CD4-positive, alpha-beta T cell (primary cell): ENCODE measurements at regions of chr22 and their contacts with region 1.

Region 1: DNA sequence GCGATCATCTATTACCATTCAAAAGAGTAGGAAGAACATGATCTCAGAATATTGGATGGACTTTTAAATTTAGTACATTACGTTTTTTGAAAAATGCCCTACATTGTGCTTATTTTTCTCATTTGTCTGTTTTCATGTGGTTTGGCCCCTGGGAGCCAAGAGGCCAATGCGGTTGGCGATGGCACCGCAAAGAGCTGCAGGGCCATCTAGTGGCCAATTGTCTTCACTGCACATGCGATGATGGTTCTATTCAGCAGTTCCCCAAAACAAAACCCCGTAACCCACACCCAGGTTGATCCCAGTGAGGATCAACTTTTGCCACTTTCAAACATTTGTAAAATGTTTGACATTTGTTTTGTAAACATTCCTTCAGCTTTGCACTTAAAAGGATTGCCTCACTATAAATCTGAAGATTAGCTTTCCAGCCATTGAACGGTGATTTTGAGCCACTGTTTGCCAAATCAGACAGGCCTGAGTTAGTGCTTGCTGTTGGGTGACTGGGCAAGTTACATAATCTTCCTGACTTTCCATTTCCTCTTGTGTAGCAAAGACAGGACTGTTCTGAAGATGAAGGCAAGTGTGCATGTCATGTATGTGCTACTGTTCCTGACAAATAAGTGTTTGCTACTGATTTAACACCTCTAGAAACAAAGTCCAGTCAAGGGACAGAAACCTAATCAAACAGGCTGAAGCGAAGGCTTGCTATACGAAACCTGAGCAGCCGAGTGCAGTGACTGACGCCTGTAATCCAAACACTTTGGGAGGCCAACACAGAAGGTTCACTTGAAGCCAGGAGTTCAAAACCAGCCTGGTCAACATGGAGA is 29.2 kb upstream of the XBP1 start:
- DNase-seq: peak; percentile 56 to 88 (median 70)
- ATAC-seq: peak; percentile 87
- H3K4me3 ChIP-seq: no peak overlapping the region
- H3K4me3 Mint-ChIP-seq: peak overlapping the region; percentile 22
- H3K27ac ChIP-seq: no peak overlapping the region
- H3K27ac Mint-ChIP-seq: no peak overlapping the region
- H3K4me1 ChIP-seq: peaks cover 8% of the 10 kb centered on the region
- H3K4me1 Mint-ChIP-seq: peaks cover 17% of the 10 kb centered on the region
- H3K27me3 ChIP-seq: no peaks in the 10 kb centered on the region
- H3K27me3 Mint-ChIP-seq: no peaks in the 10 kb centered on the region
- CTCF ChIP-seq: peak; percentile 100

Region 2: GRCh38 chr22:28019881-28020871 is 809.4 kb before region 1 on chr22:
- CTCF ChIA-PET with region 1: no interaction called
- POLR2A ChIA-PET with region 1: no interaction called
- intact Hi-C with region 1: loop called in 1 of 2 experiments (anchors 10 kb)
- DNase-seq: peak; percentile 44 to 74 (median 55)
- ATAC-seq: peak; percentile 84
- H3K4me3 ChIP-seq: no peak overlapping the region
- H3K4me3 Mint-ChIP-seq: no peak overlapping the region
- H3K27ac ChIP-seq: no peak overlapping the region
- H3K27ac Mint-ChIP-seq: no peak overlapping the region
- H3K4me1 ChIP-seq: peaks cover 6% of the 10 kb centered on the region
- H3K4me1 Mint-ChIP-seq: no peaks in the 10 kb centered on the region
- H3K27me3 ChIP-seq: no peaks in the 10 kb centered on the region
- H3K27me3 Mint-ChIP-seq: no peaks in the 10 kb centered on the region
- CTCF ChIP-seq: peak; percentile 87

Region 3: GRCh38 chr22:28381429-28382167 is 448.0 kb before region 1 on chr22:
- CTCF ChIA-PET with region 1: no interaction called
- POLR2A ChIA-PET with region 1: no interaction called
- intact Hi-C with region 1: no loop called
- DNase-seq: no peak
- ATAC-seq: no peak
- H3K4me3 ChIP-seq: no peak overlapping the region
- H3K4me3 Mint-ChIP-seq: no peak overlapping the region
- H3K27ac ChIP-seq: no peak overlapping the region
- H3K27ac Mint-ChIP-seq: no peak overlapping the region
- H3K4me1 ChIP-seq: no peaks in the 10 kb centered on the region
- H3K4me1 Mint-ChIP-seq: peaks cover 4% of the 10 kb centered on the region
- H3K27me3 ChIP-seq: no peaks in the 10 kb centered on the region
- H3K27me3 Mint-ChIP-seq: no peaks in the 10 kb centered on the region
- CTCF ChIP-seq: no peak

Region 4: DNA sequence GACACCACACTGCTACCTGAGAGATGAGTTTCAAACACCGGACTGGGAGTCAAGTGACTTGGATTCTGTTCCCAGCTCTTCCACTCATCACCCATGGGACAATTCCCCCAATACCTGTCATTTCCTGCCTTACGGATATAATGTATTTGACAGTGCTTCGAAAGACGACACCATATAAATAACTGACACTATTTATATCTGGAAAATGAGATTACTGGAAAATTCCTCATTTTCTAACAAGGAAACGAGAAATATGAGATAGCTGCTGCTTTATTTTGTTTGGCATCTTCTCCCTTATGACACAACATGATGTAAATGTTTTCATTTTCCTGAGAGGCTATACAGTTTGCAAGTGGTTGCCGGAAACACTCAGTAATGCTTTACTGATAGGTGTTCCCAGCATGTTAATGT is 79.1 kb before region 1 on chr22:
- CTCF ChIA-PET with region 1: no interaction called
- POLR2A ChIA-PET with region 1: no interaction called
- intact Hi-C with region 1: no loop called
- DNase-seq: no peak
- ATAC-seq: no peak
- H3K4me3 ChIP-seq: no peak overlapping the region
- H3K4me3 Mint-ChIP-seq: no peak overlapping the region
- H3K27ac ChIP-seq: no peak overlapping the region
- H3K27ac Mint-ChIP-seq: no peak overlapping the region
- H3K4me1 ChIP-seq: peaks cover 4% of the 10 kb centered on the region
- H3K4me1 Mint-ChIP-seq: no peaks in the 10 kb centered on the region
- H3K27me3 ChIP-seq: no peaks in the 10 kb centered on the region
- H3K27me3 Mint-ChIP-seq: no peaks in the 10 kb centered on the region
- CTCF ChIP-seq: no peak

Region 5: DNA sequence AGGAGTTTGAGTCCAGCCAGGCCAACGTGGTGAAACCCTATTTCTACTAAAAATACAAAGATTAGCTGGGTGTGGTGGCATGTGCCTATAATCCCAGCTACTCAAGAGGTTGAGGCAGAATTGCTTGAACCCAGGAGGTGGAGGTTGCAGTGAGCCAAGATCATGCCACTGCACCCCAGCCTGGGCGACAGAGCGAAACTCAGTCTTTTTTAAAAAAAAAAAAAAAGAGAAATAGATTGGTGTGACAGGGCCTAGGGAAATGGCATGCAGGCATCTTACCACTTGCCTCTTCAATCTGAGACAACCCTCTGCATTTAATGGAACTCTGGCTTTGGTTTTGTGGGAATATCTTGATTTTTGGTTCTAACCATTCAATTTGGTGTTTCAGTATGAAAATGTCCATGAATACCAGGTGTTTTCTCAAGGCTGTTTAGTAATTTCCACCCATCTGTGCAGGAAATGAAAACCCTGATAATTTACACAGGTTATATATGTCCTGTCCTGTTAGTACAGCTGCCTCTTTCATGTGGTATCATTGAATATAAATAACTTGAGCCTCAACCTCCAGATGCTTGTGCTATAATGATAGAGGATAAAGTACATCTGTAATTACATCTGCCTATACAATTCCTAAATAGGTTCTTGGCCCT is 37.6 kb before region 1 on chr22:
- CTCF ChIA-PET with region 1: interaction called, 42 read pairs
- POLR2A ChIA-PET with region 1: interaction called, 9 read pairs
- intact Hi-C with region 1: loop called (anchors 1 kb)
- DNase-seq: no peak
- ATAC-seq: no peak
- H3K4me3 ChIP-seq: no peak overlapping the region
- H3K4me3 Mint-ChIP-seq: no peak overlapping the region
- H3K27ac ChIP-seq: peak overlapping the region in 1 of 2 donors; percentile 2
- H3K27ac Mint-ChIP-seq: peak overlapping the region; percentile 4
- H3K4me1 ChIP-seq: peaks cover 44% of the 10 kb centered on the region
- H3K4me1 Mint-ChIP-seq: peaks cover 67% of the 10 kb centered on the region
- H3K27me3 ChIP-seq: no peaks in the 10 kb centered on the region
- H3K27me3 Mint-ChIP-seq: no peaks in the 10 kb centered on the region
- CTCF ChIP-seq: no peak

Region 6: GRCh38 chr22:28846994-28847393 is 17.4 kb after region 1 on chr22:
- CTCF ChIA-PET with region 1: no interaction called
- POLR2A ChIA-PET with region 1: no interaction called
- intact Hi-C with region 1: no loop called
- DNase-seq: no peak
- ATAC-seq: no peak
- H3K4me3 ChIP-seq: no peak overlapping the region
- H3K4me3 Mint-ChIP-seq: no peak overlapping the region
- H3K27ac ChIP-seq: no peak overlapping the region
- H3K27ac Mint-ChIP-seq: no peak overlapping the region
- H3K4me1 ChIP-seq: no peaks in the 10 kb centered on the region
- H3K4me1 Mint-ChIP-seq: no peaks in the 10 kb centered on the region
- H3K27me3 ChIP-seq: no peaks in the 10 kb centered on the region
- H3K27me3 Mint-ChIP-seq: no peaks in the 10 kb centered on the region
- CTCF ChIP-seq: no peak

Region 7: GRCh38 chr22:28864878-28865596 is 35.5 kb after region 1 on chr22:
- CTCF ChIA-PET with region 1: no interaction called
- POLR2A ChIA-PET with region 1: no interaction called
- intact Hi-C with region 1: no loop called
- DNase-seq: no peak
- ATAC-seq: no peak
- H3K4me3 ChIP-seq: no peak overlapping the region
- H3K4me3 Mint-ChIP-seq: no peak overlapping the region
- H3K27ac ChIP-seq: no peak overlapping the region
- H3K27ac Mint-ChIP-seq: no peak overlapping the region
- H3K4me1 ChIP-seq: no peaks in the 10 kb centered on the region
- H3K4me1 Mint-ChIP-seq: no peaks in the 10 kb centered on the region
- H3K27me3 ChIP-seq: no peaks in the 10 kb centered on the region
- H3K27me3 Mint-ChIP-seq: peaks cover 5% of the 10 kb centered on the region
- CTCF ChIP-seq: no peak